ENCODE measurements at regions of chr6 and their contacts with region 1.

Region 1: DNA sequence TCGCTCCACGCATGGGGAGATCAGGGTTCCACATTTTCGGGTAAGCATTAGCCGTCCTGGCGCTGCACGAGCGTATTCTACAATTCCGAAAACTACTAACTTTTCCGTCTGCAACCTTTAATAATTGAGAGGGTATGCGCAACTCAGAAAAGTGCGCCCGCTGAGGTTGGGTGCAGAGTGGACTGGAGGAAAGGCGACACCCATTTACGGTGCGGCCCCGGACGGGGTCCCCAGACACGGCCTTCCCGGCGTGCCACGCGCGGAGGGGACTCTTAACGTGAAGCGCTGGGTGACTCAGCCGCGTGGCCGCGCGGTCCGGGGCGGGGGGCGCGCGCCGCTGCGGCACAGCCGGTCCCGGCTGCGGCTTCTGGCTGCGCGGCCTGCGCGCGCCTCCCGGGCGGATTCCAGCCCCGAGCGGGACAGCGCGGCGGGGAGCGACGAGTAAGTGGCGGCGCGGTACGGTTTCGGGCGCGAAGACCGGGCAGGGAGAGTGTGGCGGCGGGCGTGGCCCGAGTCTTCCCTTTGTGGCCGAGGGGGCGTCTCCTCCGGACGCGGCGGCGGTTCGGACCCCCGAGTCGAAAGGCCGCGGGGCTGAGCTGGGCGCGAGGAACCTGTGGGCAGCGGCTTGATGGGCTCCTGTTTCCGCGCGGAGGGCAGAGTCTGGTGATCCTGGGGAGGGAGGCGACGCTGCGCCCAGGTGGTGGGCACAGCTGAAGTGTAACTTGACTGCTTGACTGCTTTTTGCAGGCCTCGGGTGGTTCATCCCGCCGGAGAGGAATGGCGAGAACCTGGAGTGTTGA is at the starts of genes KCTD20 and PXT1:
- DNase-seq: peak; percentile 66 to 92 (median 86)
- ATAC-seq: peak; percentile 71
- H3K4me3 ChIP-seq: peak within 1 kb of the TSS; percentile 64 to 97
- H3K4me3 Mint-ChIP-seq: peak within 1 kb of the TSS; percentile 97
- H3K27ac ChIP-seq: peak within 1 kb of the TSS; percentile 72 to 90
- H3K27ac Mint-ChIP-seq: peak within 1 kb of the TSS; percentile 99
- H3K4me1 ChIP-seq: peaks cover 31% of the 10 kb centered on the region
- H3K4me1 Mint-ChIP-seq: peaks cover 49% of the 10 kb centered on the region
- H3K27me3 ChIP-seq: no peaks in the 10 kb centered on the region
- H3K27me3 Mint-ChIP-seq: no peaks in the 10 kb centered on the region
- CTCF ChIP-seq: no peak
- total RNA-seq, gene KCTD20: 42.5 to 49.1 TPM
- total RNA-seq, gene PXT1: 0.56 to 0.95 TPM

Region 2: DNA sequence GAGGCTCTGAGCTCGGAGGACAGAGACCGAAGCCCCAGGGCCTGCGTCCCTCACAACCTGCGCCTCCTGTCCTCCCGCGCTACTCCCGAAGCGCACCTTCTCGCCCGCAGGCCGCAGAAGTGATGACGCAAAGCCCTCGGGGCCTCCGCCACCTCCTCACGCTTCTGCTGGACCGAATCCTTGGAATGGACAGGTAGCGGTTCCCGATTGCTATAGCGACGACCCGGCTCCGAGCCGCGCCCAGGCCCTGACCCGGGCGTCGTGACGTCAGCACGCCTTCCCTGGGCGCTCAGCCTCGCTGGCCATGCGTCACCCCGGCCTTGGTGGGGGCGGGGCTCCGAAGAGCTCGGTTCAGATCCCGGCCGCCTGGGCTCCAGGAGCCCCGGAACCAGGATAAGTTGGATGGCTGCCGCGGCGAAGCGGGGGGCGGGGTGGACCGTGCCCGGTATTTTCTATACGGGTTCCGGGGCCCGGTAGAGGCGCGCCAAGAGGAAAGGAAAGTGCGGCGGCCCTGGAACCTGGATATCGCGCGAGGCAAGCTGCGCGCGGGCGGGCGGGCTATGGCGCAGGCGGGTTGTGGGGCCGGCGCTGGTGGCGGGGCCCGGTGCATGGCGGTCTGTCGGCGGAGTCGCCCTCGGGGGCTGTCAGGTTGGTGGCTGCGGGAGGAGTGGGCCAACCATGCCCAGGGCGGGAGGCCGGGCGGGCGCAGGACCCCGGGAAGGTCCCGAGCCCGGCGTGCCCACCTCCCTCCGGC is 1183.5 kb before region 1 on chr6 and contains the start of gene ZNF76:
- CTCF ChIA-PET with region 1: no interaction called
- POLR2A ChIA-PET with region 1: no interaction called
- intact Hi-C with region 1: loop called in 1 of 2 experiments (anchors 10 kb)
- DNase-seq: peak; percentile 86 to 97 (median 93)
- ATAC-seq: peak; percentile 73
- H3K4me3 ChIP-seq: peak within 1 kb of the TSS; percentile 75 to 95
- H3K4me3 Mint-ChIP-seq: peak within 1 kb of the TSS; percentile 97
- H3K27ac ChIP-seq: peak within 1 kb of the TSS; percentile 88 to 96
- H3K27ac Mint-ChIP-seq: peak within 1 kb of the TSS; percentile 99
- H3K4me1 ChIP-seq: peaks cover 42% of the 10 kb centered on the region
- H3K4me1 Mint-ChIP-seq: peaks cover 55% of the 10 kb centered on the region
- H3K27me3 ChIP-seq: no peaks in the 10 kb centered on the region
- H3K27me3 Mint-ChIP-seq: no peaks in the 10 kb centered on the region
- CTCF ChIP-seq: no peak
- total RNA-seq, gene ZNF76: 54.6 to 57.8 TPM

Region 3: GRCh38 chr6:36196880-36197548 is 245.9 kb before region 1 on chr6:
- CTCF ChIA-PET with region 1: no interaction called
- POLR2A ChIA-PET with region 1: no interaction called
- intact Hi-C with region 1: loop called in 1 of 2 experiments (anchors 2 kb)
- DNase-seq: peak; percentile 99 to 100 (median 100)
- ATAC-seq: peak; percentile 91
- H3K4me3 ChIP-seq: peak overlapping the region; percentile 61 to 68
- H3K4me3 Mint-ChIP-seq: peak overlapping the region; percentile 88
- H3K27ac ChIP-seq: peak overlapping the region; percentile 74 to 77
- H3K27ac Mint-ChIP-seq: peak overlapping the region; percentile 94
- H3K4me1 ChIP-seq: peaks cover 29% of the 10 kb centered on the region
- H3K4me1 Mint-ChIP-seq: peaks cover 55% of the 10 kb centered on the region
- H3K27me3 ChIP-seq: no peaks in the 10 kb centered on the region
- H3K27me3 Mint-ChIP-seq: no peaks in the 10 kb centered on the region
- CTCF ChIP-seq: no peak

Region 4: DNA sequence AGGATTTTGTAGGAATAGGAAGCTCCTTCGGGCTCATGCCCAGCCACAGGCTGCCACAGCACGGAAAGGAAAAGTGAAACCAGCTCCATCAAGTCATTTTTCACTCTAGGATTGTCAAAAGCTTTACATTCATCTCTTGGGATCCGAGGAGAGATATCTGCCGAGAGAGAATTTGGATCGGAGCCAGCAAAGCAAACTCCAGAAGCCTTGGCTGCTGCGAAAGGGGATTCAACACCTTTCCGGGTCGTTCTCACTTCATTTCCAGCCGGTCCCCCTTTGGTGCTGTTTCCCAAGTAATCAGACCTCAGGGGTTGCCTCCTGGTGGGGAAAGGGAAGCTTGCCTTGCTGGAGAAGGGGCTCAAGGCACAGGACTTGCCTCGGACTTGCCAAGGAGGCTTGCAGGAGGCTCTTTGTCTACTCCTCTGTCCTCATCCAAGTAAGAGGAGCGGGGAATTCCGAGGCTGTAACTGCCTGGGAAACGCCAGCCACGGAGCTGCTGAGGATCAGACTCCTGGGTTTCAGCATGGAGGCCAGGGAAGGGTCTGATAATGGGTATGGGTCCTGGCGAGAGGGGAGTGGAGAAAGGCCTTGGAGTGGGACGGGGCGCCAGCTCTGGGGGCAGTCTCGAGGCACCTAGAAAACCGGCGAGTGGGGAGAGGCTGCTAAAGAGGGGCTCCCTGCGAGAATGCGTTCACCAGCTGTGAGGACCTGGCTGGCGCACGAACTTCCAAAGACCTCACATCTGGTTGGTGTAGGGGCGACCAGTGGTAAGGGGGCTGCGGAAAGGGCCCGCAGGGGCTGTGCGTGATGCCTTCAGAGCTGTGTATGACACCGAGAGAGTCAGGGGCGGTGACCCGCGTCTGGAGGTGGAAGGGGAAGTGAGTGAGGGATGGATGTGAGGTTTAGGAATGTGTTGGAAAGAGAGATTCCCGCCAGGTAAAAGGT is 56.1 kb before region 1 on chr6:
- CTCF ChIA-PET with region 1: no interaction called
- POLR2A ChIA-PET with region 1: no interaction called
- intact Hi-C with region 1: no loop called
- DNase-seq: peak in 5 of 9 experiments; percentile 12 to 42 (median 21)
- ATAC-seq: peak; percentile 60
- H3K4me3 ChIP-seq: peak overlapping the region; percentile 62 to 69
- H3K4me3 Mint-ChIP-seq: peak overlapping the region; percentile 93
- H3K27ac ChIP-seq: no peak overlapping the region
- H3K27ac Mint-ChIP-seq: peak overlapping the region; percentile 3
- H3K4me1 ChIP-seq: peaks cover 11% of the 10 kb centered on the region
- H3K4me1 Mint-ChIP-seq: peaks cover 20% of the 10 kb centered on the region
- H3K27me3 ChIP-seq: peaks cover 0 to 5% of the 10 kb centered on the region in 2 experiments
- H3K27me3 Mint-ChIP-seq: peaks cover 33% of the 10 kb centered on the region
- CTCF ChIP-seq: no peak

Region 5: GRCh38 chr6:36487698-36488097 is 44.8 kb after region 1 on chr6:
- CTCF ChIA-PET with region 1: no interaction called
- POLR2A ChIA-PET with region 1: no interaction called
- intact Hi-C with region 1: loop called in 1 of 2 experiments (anchors 2 kb)
- DNase-seq: no peak
- ATAC-seq: no peak
- H3K4me3 ChIP-seq: no peak overlapping the region
- H3K4me3 Mint-ChIP-seq: no peak overlapping the region
- H3K27ac ChIP-seq: no peak overlapping the region
- H3K27ac Mint-ChIP-seq: peak overlapping the region; percentile 45
- H3K4me1 ChIP-seq: no peaks in the 10 kb centered on the region
- H3K4me1 Mint-ChIP-seq: peaks cover 11% of the 10 kb centered on the region
- H3K27me3 ChIP-seq: no peaks in the 10 kb centered on the region
- H3K27me3 Mint-ChIP-seq: no peaks in the 10 kb centered on the region
- CTCF ChIP-seq: no peak

Region 6: DNA sequence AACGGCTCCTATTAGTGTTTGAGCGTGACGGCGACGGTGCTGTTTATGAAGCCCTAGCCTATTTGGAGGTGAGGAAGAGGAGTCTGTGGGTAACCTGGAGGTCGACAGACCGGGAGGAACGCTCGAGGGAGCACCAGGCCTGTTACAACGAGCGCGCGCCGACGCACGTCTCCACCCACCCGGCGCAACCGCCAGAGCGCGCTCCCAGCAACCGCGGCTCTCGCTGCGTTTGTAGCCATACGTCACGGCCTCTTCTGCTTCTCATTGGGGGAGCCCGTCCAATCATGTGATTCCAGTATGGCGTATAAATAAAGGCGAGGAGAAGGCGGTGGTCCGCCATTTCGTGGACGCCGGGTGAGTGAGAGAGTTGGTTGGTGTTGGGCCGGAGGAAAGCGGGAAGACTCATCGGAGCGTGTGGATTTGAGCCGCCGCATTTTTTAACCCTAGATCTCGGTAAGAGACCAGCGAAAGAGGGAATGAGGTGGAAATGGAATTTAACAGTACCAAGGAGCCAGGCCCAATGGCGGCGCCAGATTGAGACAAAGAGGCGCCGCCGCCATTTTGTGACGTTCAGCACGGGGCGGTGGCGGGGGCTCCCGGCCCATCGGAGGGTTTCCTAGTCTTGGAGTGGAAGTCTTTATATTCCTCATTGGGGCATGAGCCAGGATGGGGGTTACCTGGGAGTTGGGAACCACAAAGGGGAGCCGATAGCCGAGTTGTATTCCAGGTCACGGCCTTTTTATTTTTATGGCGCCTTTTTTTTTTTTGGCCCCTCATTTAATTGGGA is 151.4 kb after region 1 on chr6 and contains the start of gene SRSF3:
- CTCF ChIA-PET with region 1: interaction called, 3 read pairs
- POLR2A ChIA-PET with region 1: interaction called, 9 read pairs
- intact Hi-C with region 1: loop called (anchors 1 kb)
- DNase-seq: peak; percentile 90 to 99 (median 94)
- ATAC-seq: peak; percentile 86
- H3K4me3 ChIP-seq: peak within 1 kb of the TSS; percentile 72 to 74
- H3K4me3 Mint-ChIP-seq: peak within 1 kb of the TSS; percentile 97
- H3K27ac ChIP-seq: peak within 1 kb of the TSS; percentile 93 to 95
- H3K27ac Mint-ChIP-seq: peak within 1 kb of the TSS; percentile 99
- H3K4me1 ChIP-seq: peaks cover 42% of the 10 kb centered on the region
- H3K4me1 Mint-ChIP-seq: peaks cover 45% of the 10 kb centered on the region
- H3K27me3 ChIP-seq: no peaks in the 10 kb centered on the region
- H3K27me3 Mint-ChIP-seq: no peaks in the 10 kb centered on the region
- CTCF ChIP-seq: no peak
- total RNA-seq, gene SRSF3: 620 to 627 TPM